ENCODE measurements at regions of chr12 and their contacts with region 1.

Region 1: GRCh38 chr12:123905319-123905925 is 67.2 kb downstream of the CCDC92 start:
- DNase-seq: peak; percentile 74
- H3K4me3 Mint-ChIP-seq: no peak overlapping the region
- H3K27ac Mint-ChIP-seq: no peak overlapping the region
- H3K4me1 Mint-ChIP-seq: peaks cover 8% of the 10 kb centered on the region
- H3K27me3 Mint-ChIP-seq: peaks cover 91% of the 10 kb centered on the region
- CTCF ChIP-seq: peak; percentile 78

Region 2: GRCh38 chr12:123705935-123706334 is 199.5 kb before region 1 on chr12:
- CTCF ChIA-PET with region 1: no interaction called
- intact Hi-C with region 1: no loop called
- DNase-seq: no peak
- H3K4me3 Mint-ChIP-seq: no peak overlapping the region
- H3K27ac Mint-ChIP-seq: no peak overlapping the region
- H3K4me1 Mint-ChIP-seq: no peaks in the 10 kb centered on the region
- H3K27me3 Mint-ChIP-seq: no peaks in the 10 kb centered on the region
- CTCF ChIP-seq: no peak

Region 3: GRCh38 chr12:123972457-123973401 is 67.3 kb after region 1 on chr12 and contains the starts of genes CCDC92 and ZNF664:
- CTCF ChIA-PET with region 1: interaction called, 10 read pairs
- intact Hi-C with region 1: no loop called
- DNase-seq: peak; percentile 99
- H3K4me3 Mint-ChIP-seq: peak within 1 kb of the TSS; percentile 80
- H3K27ac Mint-ChIP-seq: peak within 1 kb of the TSS; percentile 60
- H3K4me1 Mint-ChIP-seq: peaks cover 31% of the 10 kb centered on the region
- H3K27me3 Mint-ChIP-seq: no peaks in the 10 kb centered on the region
- CTCF ChIP-seq: no peak
- total RNA-seq, gene CCDC92: 31.8 and 35.0 TPM in 2 replicates
- total RNA-seq, gene ZNF664: 130 and 147 TPM in 2 replicates

Region 4: DNA sequence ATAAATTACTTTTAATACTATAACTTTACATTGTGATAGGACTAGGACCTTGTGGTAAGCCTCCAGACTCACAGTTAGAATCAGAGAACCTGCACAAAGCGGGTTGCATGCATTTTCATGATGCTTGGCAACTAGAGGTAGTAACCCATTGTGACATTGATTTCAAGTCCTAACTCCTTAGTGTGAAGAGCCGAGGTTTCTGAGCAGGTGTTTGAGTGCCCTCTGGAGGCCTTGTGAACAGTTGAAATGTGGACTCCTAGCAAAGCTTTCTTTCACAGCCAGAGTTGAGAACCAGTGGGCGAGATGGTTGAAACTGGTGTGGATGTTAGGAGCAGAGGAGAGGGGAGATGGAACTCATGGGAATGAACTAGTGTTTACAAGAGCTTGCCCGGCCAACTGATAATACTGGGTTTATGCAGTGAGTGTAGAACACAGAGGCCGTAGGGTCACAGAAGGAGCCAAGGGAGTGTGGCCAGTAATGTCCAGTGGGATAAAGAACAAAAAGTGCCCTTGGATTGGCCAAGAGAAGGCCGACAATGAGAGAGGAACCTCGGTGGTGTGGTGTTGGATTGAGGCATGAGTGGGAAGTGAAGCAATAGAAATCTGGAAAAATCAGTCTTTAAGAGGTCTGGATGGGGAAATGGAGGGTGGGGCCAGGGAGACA is 78.5 kb after region 1 on chr12:
- CTCF ChIA-PET with region 1: interaction called, 3 read pairs
- intact Hi-C with region 1: loop called (anchors 1 kb)
- DNase-seq: peak; percentile 46
- H3K4me3 Mint-ChIP-seq: no peak overlapping the region
- H3K27ac Mint-ChIP-seq: no peak overlapping the region
- H3K4me1 Mint-ChIP-seq: peaks cover 27% of the 10 kb centered on the region
- H3K27me3 Mint-ChIP-seq: no peaks in the 10 kb centered on the region
- CTCF ChIP-seq: peak; percentile 41

Region 5: GRCh38 chr12:124107331-124107730 is 201.9 kb after region 1 on chr12:
- CTCF ChIA-PET with region 1: no interaction called
- intact Hi-C with region 1: no loop called
- DNase-seq: no peak
- H3K4me3 Mint-ChIP-seq: no peak overlapping the region
- H3K27ac Mint-ChIP-seq: no peak overlapping the region
- H3K4me1 Mint-ChIP-seq: peaks cover 7% of the 10 kb centered on the region
- H3K27me3 Mint-ChIP-seq: no peaks in the 10 kb centered on the region
- CTCF ChIP-seq: no peak

Region 6: DNA sequence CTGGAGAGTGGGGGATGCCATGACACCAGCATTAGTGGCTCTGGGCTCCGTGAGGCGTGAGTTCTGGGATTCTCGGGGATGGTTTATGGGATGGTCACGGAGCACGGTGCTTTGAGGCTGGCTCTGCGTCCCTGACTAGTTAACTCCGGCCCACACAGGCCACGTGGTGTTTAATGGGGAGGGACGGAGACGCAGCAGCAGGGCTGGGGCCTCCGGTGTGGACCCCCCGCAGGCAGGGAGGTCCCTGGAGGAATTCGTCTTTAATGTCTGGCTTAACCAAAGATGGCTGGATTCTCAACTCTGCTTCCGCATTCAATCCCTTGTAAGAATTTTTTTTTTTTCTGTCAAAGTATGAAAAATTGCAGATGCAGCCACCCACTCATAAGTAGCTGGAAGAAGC is 303.1 kb after region 1 on chr12:
- CTCF ChIA-PET with region 1: no interaction called
- intact Hi-C with region 1: no loop called
- DNase-seq: no peak
- H3K4me3 Mint-ChIP-seq: no peak overlapping the region
- H3K27ac Mint-ChIP-seq: no peak overlapping the region
- H3K4me1 Mint-ChIP-seq: no peaks in the 10 kb centered on the region
- H3K27me3 Mint-ChIP-seq: peaks cover 65% of the 10 kb centered on the region
- CTCF ChIP-seq: no peak